Brain microvascular endothelial cell (primary cell): ENCODE measurements at regions of chr22 and their contacts with region 1.

Region 1: DNA sequence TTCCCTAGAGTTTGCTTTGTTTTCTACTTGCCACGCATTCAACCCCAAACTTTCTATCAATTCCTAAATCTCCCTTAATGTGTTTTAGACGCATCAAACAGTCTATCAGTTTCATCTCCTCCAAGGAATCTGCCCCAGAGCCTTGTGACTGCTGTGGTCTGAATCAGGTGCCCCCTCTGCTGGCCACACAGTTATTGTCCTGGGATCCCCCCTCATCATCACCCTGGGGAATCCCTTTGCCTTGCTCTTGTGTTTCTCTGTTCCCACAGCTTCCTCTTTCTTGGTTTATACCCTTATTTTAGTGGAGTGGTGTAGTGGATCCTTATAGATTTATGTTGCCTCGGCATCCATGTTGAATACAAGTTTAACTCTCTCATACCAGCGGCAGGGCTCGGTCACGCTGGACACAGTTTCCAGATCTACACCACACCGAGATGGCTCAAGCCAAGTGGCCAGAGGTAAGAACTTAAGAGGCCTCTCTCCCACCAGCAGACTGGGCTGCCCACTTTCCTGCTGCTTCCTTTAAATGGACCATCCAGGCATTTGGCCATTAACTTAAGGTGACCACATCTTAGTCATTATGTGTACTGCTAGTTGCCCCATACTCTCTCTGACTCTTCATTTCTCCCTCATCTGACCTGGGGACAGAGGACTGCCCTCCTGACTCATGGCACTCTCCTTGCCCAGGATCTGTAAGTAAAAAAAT is 8.2 kb downstream of the UPB1 start:
- DNase-seq: peak; percentile 68
- H3K4me3 ChIP-seq: no peak overlapping the region
- H3K27ac ChIP-seq: no peak overlapping the region
- H3K27me3 ChIP-seq: no peaks in the 10 kb centered on the region
- CTCF ChIP-seq: peak; percentile 90

Region 2: DNA sequence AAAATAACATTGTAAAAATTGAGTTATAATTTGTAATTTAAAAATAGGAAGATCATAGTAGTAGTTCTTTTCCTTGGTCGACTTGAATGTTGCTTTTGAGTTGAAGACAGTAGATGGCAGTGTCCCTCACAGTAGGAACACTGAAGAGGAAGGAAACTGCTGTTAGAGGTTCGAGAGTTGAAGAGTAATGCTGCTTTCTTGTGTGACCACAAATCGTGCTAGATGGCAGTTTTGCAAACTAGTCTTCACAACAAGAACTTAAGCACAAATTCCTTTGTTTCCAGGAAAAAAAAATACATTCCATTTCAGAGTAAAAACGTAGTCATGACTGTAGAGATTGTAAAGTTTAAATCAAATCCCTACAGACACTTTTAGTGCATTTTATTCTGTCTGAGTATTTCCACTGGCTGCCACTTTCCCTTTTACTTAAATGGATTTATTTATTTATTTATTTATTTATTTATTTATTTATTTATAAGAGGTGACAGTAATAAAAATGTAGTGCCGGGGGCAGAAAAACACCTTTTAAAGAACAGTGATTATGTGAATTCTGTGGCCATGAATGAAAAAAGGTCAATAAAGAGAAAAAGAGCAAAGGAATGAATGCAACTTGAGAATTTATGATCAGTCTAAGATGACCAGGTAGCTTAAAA is 178.1 kb before region 1 on chr22:
- in situ Hi-C with region 1: loop called (anchors 25 kb)
- DNase-seq: peak; percentile 73
- H3K4me3 ChIP-seq: no peak overlapping the region
- H3K27ac ChIP-seq: no peak overlapping the region
- H3K27me3 ChIP-seq: no peaks in the 10 kb centered on the region
- CTCF ChIP-seq: peak; percentile 75

Region 3: GRCh38 chr22:24768537-24769374 is 265.5 kb after region 1 on chr22:
- in situ Hi-C with region 1: no loop called
- DNase-seq: peak; percentile 39
- H3K4me3 ChIP-seq: no peak overlapping the region
- H3K27ac ChIP-seq: no peak overlapping the region
- H3K27me3 ChIP-seq: no peaks in the 10 kb centered on the region
- CTCF ChIP-seq: peak; percentile 80